Posterior cingulate gyrus (tissue), 11 donors: ENCODE measurements at regions of chr19 and their contacts with region 1.

Region 1: GRCh38 chr19:40640744-40641143 is 39.6 kb downstream of the LTBP4 start:
- DNase-seq: peak in 2 of 10 donors; percentile 24 to 49

Region 2: DNA sequence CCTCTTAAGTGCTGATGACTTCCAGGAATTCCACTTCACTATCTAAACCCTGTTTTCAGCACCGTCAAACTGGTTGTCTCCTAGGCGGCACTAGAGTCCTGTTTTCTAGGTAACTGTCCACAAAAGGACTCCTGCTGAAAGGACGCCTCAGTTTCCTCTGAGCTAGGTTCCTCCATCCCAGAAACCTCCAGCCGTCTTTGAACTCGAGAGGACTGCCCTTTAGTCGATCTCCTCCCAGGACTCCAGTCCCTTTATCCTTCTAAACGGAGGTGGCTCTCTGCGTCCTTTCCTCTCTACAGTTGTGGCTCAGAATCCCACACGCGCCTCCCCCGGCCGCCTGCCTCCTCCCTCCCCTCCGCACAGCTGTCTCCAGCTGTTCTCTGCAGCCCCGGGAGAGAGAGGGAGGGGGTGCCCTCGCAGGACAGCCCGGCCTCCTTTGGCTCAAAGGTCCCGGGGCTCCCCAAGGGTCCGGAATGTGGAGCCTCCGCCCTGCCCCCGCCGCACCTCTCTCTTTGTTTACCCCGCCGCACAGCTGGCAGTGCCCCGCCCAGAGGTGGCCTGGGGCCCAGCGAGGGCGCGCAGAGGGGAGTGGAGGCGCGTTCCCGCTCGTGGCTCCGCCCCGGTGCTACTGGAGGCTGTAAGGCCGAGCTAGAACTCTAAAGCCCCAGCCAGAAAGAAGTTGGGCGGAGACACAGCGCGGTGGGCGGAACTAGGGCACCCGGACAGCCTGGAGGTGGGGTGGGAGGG is 37.2 kb before region 1 on chr19:
- intact Hi-C with region 1: loop called (anchors 2 kb)
- DNase-seq: peak; percentile 72 to 98 (median 88)